CD8-positive, alpha-beta memory T cell (primary cell): ENCODE measurements at regions of chr12 and their contacts with region 1.

Region 1: GRCh38 chr12:118372541-118373495 is at the start of gene TAOK3:
- DNase-seq: peak; percentile 96 to 98 (median 96)
- H3K4me3 ChIP-seq: peak within 1 kb of the TSS; percentile 90
- H3K4me3 Mint-ChIP-seq: peak within 1 kb of the TSS; percentile 87 to 98 (median 92)
- H3K27ac ChIP-seq: peak within 1 kb of the TSS; percentile 74
- H3K27ac Mint-ChIP-seq: peak within 1 kb of the TSS; percentile 85 to 98 (median 94)
- H3K4me1 ChIP-seq: peaks cover 37% of the 10 kb centered on the region
- H3K4me1 Mint-ChIP-seq: peaks cover 44 to 73% (median 58%) of the 10 kb centered on the region in 3 donors
- H3K27me3 ChIP-seq: no peaks in the 10 kb centered on the region
- H3K27me3 Mint-ChIP-seq: peaks cover 0 to 3% of the 10 kb centered on the region in 2 donors
- total RNA-seq, gene TAOK3: 52.5 to 53.0 TPM

Region 2: DNA sequence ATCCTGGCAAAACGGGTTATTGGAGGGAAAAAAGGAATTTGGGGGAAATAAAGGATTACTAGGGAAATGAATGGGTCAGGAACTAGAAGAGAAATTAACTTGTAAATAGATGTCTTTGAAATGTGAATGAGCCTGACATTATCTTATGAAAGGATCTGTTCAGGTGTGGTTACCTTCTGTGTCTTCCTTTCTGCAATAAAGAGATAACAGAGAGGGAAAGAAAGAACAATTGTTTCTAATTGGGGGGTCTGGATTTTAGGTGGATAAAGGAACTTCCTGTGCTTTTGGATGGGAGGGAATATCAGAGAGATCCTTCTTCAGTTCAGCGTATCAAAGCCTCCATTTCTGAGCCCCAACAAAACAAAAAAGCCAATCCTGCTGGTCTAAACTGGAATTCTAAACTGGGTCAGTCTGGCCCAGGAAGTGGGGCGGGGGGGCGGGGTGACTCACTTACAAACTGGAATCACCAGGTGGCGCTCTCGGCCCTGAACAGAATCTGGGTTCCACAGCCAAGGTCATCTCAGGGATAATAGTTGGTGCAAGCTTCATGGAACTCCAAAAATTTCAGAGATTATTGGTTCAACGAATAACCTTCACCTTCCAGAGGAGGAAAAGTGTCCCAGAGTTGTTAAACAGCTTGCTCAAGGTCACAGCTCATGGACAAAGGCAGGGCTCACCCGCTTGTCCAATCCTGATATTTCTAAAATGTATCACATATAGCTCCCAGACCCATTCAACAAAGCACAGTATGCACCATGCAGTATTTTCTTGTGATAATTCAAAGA is 252.0 kb before region 1 on chr12:
- CTCF ChIA-PET with region 1: interaction called, 36 read pairs
- POLR2A ChIA-PET with region 1: interaction called, 5 read pairs
- DNase-seq: peak; percentile 28 to 68 (median 52)
- H3K4me3 ChIP-seq: no peak overlapping the region
- H3K4me3 Mint-ChIP-seq: peak overlapping the region in 2 of 7 donors; percentile 46 to 62
- H3K27ac ChIP-seq: peak overlapping the region; percentile 40
- H3K27ac Mint-ChIP-seq: peak overlapping the region; percentile 26 to 98 (median 88)
- H3K4me1 ChIP-seq: peaks cover 4% of the 10 kb centered on the region
- H3K4me1 Mint-ChIP-seq: peaks cover 7 to 14% (median 9%) of the 10 kb centered on the region in 3 donors
- H3K27me3 ChIP-seq: no peaks in the 10 kb centered on the region
- H3K27me3 Mint-ChIP-seq: peaks cover 0 to 1% of the 10 kb centered on the region in 2 donors

Region 3: DNA sequence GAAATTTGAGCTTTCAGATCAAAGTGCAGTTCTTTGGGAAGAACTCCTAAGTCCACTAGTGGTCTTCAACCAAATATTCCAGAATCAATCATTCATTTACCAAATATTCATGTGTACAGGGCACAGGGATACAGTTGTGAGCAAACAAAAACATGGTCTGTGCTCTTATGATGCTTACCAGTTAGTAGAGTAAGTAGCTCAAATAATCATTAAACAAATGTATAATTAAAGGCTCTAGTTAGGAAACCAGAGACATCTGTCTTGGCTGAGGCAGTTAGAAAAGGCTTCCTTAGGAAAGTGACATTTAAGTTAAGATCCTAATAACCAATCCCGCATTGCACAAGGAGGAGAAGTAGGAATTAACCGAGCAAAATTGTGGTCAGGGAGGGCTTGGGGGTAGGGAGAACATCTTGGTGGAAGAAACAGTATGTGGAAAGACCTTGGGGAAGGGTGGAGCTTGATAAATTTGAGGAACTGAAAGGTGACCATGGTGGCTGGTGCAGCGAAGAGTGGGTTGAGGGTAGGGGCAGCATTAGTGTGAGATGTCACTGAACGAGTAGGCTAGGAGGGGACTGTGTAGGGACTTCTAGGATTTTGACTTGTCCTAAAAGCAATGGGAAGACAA is 196.9 kb before region 1 on chr12:
- CTCF ChIA-PET with region 1: interaction called, 63 read pairs
- POLR2A ChIA-PET with region 1: no interaction called
- DNase-seq: no peak
- H3K4me3 ChIP-seq: no peak overlapping the region
- H3K4me3 Mint-ChIP-seq: no peak overlapping the region
- H3K27ac ChIP-seq: no peak overlapping the region
- H3K27ac Mint-ChIP-seq: peak overlapping the region in 1 of 8 donors; percentile 31
- H3K4me1 ChIP-seq: no peaks in the 10 kb centered on the region
- H3K4me1 Mint-ChIP-seq: peaks cover 0 to 2% (median 0%) of the 10 kb centered on the region in 3 donors
- H3K27me3 ChIP-seq: no peaks in the 10 kb centered on the region
- H3K27me3 Mint-ChIP-seq: peaks cover 0 to 3% of the 10 kb centered on the region in 2 donors

Region 4: GRCh38 chr12:118346895-118347294 is 25.9 kb before region 1 on chr12:
- CTCF ChIA-PET with region 1: interaction called, 95 read pairs
- POLR2A ChIA-PET with region 1: no interaction called
- DNase-seq: no peak
- H3K4me3 ChIP-seq: no peak overlapping the region
- H3K4me3 Mint-ChIP-seq: peak overlapping the region in 1 of 7 donors; percentile 73
- H3K27ac ChIP-seq: no peak overlapping the region
- H3K27ac Mint-ChIP-seq: peak overlapping the region in 5 of 8 donors; percentile 10 to 60 (median 17)
- H3K4me1 ChIP-seq: peaks cover 17% of the 10 kb centered on the region
- H3K4me1 Mint-ChIP-seq: peaks cover 42 to 71% (median 59%) of the 10 kb centered on the region in 3 donors
- H3K27me3 ChIP-seq: no peaks in the 10 kb centered on the region
- H3K27me3 Mint-ChIP-seq: no peaks in the 10 kb centered on the region